Activated CD4-positive, alpha-beta memory T cell treated with anti-CD3 and anti-CD28 coated beads for 36 hours (primary cell): ENCODE measurements at regions of chr7 and their contacts with region 1.

Region 1: DNA sequence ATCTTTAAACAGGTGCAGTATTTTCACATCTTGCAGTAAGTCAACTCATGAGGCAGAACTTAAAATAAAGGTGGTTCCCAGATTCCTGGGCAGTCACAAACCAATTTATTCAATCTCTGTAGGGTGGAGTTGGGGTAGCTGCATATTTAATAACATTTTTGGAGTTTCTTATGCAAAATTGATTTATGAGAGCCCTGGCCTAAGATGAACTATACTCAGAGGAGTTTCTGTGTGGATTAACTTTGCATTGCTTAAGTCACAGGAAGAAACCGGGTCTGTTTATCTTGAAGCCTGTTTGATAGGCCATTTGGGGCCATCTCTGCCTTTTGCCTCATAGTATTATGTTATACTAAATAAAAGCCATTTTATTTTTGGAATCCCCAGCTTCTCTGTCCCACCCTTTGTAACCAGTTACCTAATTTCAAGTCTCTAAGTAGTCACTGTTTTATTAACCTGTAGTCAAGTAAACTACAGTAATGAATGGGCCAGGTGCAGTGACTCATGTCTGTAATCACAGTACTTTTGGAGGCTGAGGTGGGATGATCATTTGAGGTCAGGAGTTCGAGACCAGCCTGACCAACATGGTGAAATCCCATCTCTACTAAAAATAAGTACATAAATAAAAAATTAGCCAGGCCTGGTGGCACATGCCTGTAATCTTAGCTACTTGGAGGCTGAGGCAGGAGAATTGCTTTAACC is 104.4 kb upstream of the FAM3C start:
- DNase-seq: peak; percentile 33
- H3K4me3 Mint-ChIP-seq: no peak overlapping the region
- H3K27ac Mint-ChIP-seq: peak overlapping the region; percentile 32
- H3K4me1 Mint-ChIP-seq: peaks cover 17% of the 10 kb centered on the region
- H3K27me3 Mint-ChIP-seq: no peaks in the 10 kb centered on the region

Region 2: GRCh38 chr7:121437456-121438127 is 62.9 kb before region 1 on chr7:
- CTCF ChIA-PET with region 1: no interaction called
- POLR2A ChIA-PET with region 1: interaction called, 3 read pairs
- intact Hi-C with region 1: loop called (anchors 1 kb)
- DNase-seq: no peak
- H3K4me3 Mint-ChIP-seq: no peak overlapping the region
- H3K27ac Mint-ChIP-seq: peak overlapping the region; percentile 74
- H3K4me1 Mint-ChIP-seq: peaks cover 30% of the 10 kb centered on the region
- H3K27me3 Mint-ChIP-seq: no peaks in the 10 kb centered on the region

Region 3: GRCh38 chr7:121485467-121486243 is 14.9 kb before region 1 on chr7:
- CTCF ChIA-PET with region 1: no interaction called
- POLR2A ChIA-PET with region 1: no interaction called
- intact Hi-C with region 1: no loop called
- DNase-seq: no peak
- H3K4me3 Mint-ChIP-seq: no peak overlapping the region
- H3K27ac Mint-ChIP-seq: no peak overlapping the region
- H3K4me1 Mint-ChIP-seq: peaks cover 7% of the 10 kb centered on the region
- H3K27me3 Mint-ChIP-seq: peaks cover 2% of the 10 kb centered on the region

Region 4: DNA sequence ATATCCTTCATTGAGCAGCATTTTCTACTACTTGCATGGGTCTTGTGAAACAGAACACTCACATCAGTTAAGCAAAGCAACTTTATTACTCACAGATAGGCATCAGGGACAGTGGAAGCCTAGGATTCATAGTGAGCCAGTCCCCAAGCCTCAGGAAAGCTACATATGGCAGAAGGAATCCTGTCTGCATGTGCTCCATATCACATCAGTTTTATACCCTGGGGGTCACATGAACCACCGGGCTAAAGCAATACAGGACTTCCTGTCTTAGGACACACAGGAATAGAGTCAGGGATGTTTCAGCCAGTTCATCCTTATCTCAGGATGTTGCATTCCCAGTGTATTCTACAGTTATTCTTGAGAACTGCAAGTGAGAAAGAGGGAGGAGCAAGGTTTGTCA is 788.9 kb after region 1 on chr7:
- CTCF ChIA-PET with region 1: no interaction called
- POLR2A ChIA-PET with region 1: no interaction called
- intact Hi-C with region 1: no loop called
- DNase-seq: no peak
- H3K4me3 Mint-ChIP-seq: no peak overlapping the region
- H3K27ac Mint-ChIP-seq: no peak overlapping the region
- H3K4me1 Mint-ChIP-seq: no peaks in the 10 kb centered on the region
- H3K27me3 Mint-ChIP-seq: peaks cover 2% of the 10 kb centered on the region